ENCODE measurements at regions of chr5 and their contacts with region 1.

Region 1: DNA sequence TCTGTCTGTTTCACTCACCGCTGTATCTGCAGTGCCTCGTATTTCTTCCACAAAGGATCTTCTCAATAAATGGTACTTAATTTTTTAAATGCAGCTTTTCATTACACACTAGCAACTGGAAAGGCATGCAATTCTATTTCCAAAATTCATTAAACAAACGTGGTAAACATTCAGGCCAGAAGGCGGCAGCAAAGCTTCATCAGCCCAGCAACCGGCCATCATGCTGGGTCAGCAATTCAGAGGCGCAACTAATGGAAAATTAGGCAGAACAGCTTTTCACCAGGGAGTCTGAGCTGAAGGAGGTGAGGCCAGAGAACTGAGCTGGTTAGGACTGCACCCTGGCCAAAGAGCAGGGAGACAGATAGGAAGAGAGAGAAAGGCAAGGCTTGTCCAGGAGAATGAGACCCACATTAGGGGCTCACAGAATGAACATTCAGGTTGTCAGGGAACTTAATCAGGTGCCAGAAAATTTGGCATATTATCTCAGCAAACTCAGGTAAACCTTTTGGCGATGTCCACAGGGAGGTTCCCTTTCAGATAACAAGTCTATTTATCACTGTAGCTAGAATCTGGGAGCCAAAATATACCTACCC is 17.7 kb upstream of the RNF180 start:
- DNase-seq: peak; percentile 71 to 79
- H3K4me3 ChIP-seq: no peak overlapping the region
- H3K27ac ChIP-seq: no peak overlapping the region
- H3K4me1 ChIP-seq: peaks cover 0 to 3% of the 10 kb centered on the region in 2 donors
- H3K27me3 ChIP-seq: no peaks in the 10 kb centered on the region
- CTCF ChIP-seq: peak; percentile 42 to 96 (median 88)
- POLR2A ChIP-seq: no peak

Region 2: DNA sequence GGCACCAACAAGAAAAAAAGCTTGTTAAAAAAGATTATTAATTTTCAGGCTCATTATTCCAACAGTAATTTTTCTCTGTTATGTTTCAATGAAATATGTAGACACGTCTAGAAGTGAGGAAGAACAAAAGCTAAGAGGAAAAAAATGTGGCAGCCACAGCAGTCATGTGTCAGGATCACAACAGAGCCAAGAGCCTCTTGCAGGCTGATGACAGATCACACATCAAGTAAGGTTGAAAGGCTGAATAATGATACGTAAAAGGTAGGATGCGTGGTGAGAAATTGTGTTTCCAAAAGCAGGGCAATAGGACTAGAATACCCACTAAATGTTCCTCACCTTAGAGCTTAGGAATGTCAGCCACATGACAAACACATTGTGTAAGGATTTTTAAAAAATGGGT is 310.5 kb before region 1 on chr5:
- intact Hi-C with region 1: no loop called
- DNase-seq: no peak
- H3K4me3 ChIP-seq: no peak overlapping the region
- H3K27ac ChIP-seq: no peak overlapping the region
- H3K4me1 ChIP-seq: no peaks in the 10 kb centered on the region
- H3K27me3 ChIP-seq: no peaks in the 10 kb centered on the region
- CTCF ChIP-seq: no peak
- POLR2A ChIP-seq: no peak

Region 3: GRCh38 chr5:64207978-64208377 is 60.0 kb after region 1 on chr5:
- intact Hi-C with region 1: loop called (anchors 5 kb)
- DNase-seq: no peak
- H3K4me3 ChIP-seq: no peak overlapping the region
- H3K27ac ChIP-seq: no peak overlapping the region
- H3K4me1 ChIP-seq: no peaks in the 10 kb centered on the region
- H3K27me3 ChIP-seq: no peaks in the 10 kb centered on the region
- CTCF ChIP-seq: peak in 3 of 6 experiments; percentile 33 to 66 (median 50)
- POLR2A ChIP-seq: no peak

Region 4: GRCh38 chr5:64612344-64612961 is 464.5 kb after region 1 on chr5:
- intact Hi-C with region 1: loop called (anchors 5 kb)
- DNase-seq: peak; percentile 45 to 48
- H3K4me3 ChIP-seq: no peak overlapping the region
- H3K27ac ChIP-seq: no peak overlapping the region
- H3K4me1 ChIP-seq: no peaks in the 10 kb centered on the region
- H3K27me3 ChIP-seq: no peaks in the 10 kb centered on the region
- CTCF ChIP-seq: peak in 5 of 6 experiments; percentile 47 to 91 (median 79)
- POLR2A ChIP-seq: no peak

Measured in thyroid gland (tissue), 4 donors.